Aorta (tissue), 5 donors: ENCODE measurements at regions of chr17 and their contacts with region 1.

Region 1: GRCh38 chr17:57084802-57085447 is at the start of gene AKAP1:
- DNase-seq: peak; percentile 98 to 99
- ATAC-seq: peak; percentile 96
- H3K4me3 ChIP-seq: peak within 1 kb of the TSS; percentile 80 to 87
- H3K27ac ChIP-seq: peak within 1 kb of the TSS; percentile 47 to 96
- H3K4me1 ChIP-seq: peaks cover 2 to 13% of the 10 kb centered on the region in 2 donors
- H3K27me3 ChIP-seq: no peaks in the 10 kb centered on the region
- total RNA-seq, gene AKAP1: 62.4 to 68.9 TPM

Region 2: GRCh38 chr17:57033295-57033694 is 51.6 kb before region 1 on chr17:
- intact Hi-C with region 1: loop called (anchors 2 to 5 kb)
- DNase-seq: peak in 1 of 2 donors; percentile 61
- ATAC-seq: peak; percentile 83
- H3K4me3 ChIP-seq: no peak overlapping the region
- H3K27ac ChIP-seq: peak overlapping the region; percentile 59 to 88
- H3K4me1 ChIP-seq: peaks cover 3 to 5% of the 10 kb centered on the region in 2 donors
- H3K27me3 ChIP-seq: no peaks in the 10 kb centered on the region

Region 3: DNA sequence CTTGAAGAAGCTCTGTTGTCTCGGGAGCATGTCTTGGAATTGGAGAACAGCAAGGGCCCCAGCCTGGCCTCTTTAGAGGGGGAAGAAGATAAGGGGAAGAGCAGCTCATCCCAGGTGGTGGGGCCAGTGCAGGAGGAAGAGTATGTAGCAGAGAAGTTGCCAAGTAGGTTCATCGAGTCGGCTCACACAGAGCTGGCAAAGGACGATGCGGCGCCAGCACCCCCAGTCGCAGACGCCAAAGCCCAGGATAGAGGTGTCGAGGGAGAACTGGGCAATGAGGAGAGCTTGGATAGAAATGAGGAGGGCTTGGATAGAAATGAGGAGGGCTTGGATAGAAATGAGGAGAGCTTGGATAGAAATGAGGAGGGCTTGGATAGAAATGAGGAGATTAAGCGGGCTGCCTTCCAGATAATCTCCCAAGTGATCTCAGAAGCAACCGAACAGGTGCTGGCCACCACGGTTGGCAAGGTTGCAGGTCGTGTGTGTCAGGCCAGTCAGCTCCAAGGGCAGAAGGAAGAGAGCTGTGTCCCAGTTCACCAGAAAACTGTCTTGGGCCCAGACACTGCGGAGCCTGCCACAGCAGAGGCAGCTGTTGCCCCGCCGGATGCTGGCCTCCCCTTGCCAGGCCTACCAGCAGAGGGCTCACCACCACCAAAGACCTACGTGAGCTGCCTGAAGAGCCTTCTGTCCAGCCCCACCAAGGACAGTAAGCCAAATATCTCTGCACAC is 21.3 kb after region 1 on chr17:
- intact Hi-C with region 1: no loop called
- DNase-seq: no peak
- ATAC-seq: no peak
- H3K4me3 ChIP-seq: no peak overlapping the region
- H3K27ac ChIP-seq: no peak overlapping the region
- H3K4me1 ChIP-seq: no peaks in the 10 kb centered on the region
- H3K27me3 ChIP-seq: no peaks in the 10 kb centered on the region

Region 4: DNA sequence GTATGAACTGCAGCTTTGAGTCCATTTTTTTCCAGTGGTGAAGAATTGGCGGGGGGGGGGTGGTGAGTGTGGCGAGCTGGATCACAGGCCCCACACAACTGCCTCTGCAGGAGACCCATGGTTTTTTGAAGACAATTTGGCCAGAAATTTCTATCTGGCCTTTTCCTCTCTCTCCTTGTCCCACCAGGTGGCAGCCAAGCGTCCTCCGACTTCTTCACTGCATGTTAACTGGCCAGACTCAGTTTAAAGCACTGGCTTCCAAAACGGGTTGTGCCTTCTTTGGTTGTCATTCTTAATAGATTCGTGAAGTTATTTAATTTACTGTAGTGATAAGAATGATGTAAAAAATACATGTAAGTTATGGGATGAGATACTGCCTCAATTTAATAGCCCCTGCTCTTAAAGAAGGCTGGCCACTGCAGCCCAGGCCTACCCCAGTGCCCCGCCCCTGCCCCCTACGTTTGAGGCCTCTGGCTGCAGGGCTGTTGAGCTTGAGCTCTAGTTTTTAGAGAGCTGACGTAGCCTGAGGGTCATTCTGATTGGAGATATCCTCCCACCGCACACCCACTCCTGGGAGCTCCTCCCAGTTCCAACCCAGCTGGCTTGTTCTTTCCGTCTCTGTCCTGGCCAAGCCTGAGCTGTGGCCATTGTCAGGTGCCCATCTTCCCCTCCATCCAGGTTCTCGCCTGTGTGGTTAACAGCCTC is 36.6 kb after region 1 on chr17:
- intact Hi-C with region 1: loop called in 1 of 2 experiments (anchors 5 kb)
- DNase-seq: no peak
- ATAC-seq: no peak
- H3K4me3 ChIP-seq: no peak overlapping the region
- H3K27ac ChIP-seq: no peak overlapping the region
- H3K4me1 ChIP-seq: no peaks in the 10 kb centered on the region
- H3K27me3 ChIP-seq: no peaks in the 10 kb centered on the region